Transverse colon (tissue), 4 donors: ENCODE measurements at regions of chr22 and their contacts with region 1.

Region 1: GRCh38 chr22:37817705-37818408 is 5.3 kb upstream of the GALR3 start:
- DNase-seq: peak; percentile 90
- H3K4me3 ChIP-seq: peak overlapping the region in 3 of 4 donors; percentile 15 to 45 (median 17)
- H3K27ac ChIP-seq: peak overlapping the region in 2 of 4 donors; percentile 50
- H3K4me1 ChIP-seq: peaks cover 13 to 20% (median 16%) of the 10 kb centered on the region in 4 donors
- H3K27me3 ChIP-seq: peaks cover 18% of the 10 kb centered on the region
- CTCF ChIP-seq: peak; percentile 90 to 98 (median 96)
- EP300 ChIP-seq: no peak
- POLR2A ChIP-seq: no peak

Region 2: GRCh38 chr22:37741312-37741795 is 76.5 kb before region 1 on chr22:
- in situ Hi-C with region 1: no loop called
- intact Hi-C with region 1: no loop called
- DNase-seq: peak; percentile 81
- H3K4me3 ChIP-seq: no peak overlapping the region
- H3K27ac ChIP-seq: peak overlapping the region; percentile 57 to 93 (median 85)
- H3K4me1 ChIP-seq: peaks cover 10 to 45% (median 29%) of the 10 kb centered on the region in 4 donors
- H3K27me3 ChIP-seq: no peaks in the 10 kb centered on the region
- CTCF ChIP-seq: no peak
- EP300 ChIP-seq: peak; percentile 73
- POLR2A ChIP-seq: no peak

Region 3: DNA sequence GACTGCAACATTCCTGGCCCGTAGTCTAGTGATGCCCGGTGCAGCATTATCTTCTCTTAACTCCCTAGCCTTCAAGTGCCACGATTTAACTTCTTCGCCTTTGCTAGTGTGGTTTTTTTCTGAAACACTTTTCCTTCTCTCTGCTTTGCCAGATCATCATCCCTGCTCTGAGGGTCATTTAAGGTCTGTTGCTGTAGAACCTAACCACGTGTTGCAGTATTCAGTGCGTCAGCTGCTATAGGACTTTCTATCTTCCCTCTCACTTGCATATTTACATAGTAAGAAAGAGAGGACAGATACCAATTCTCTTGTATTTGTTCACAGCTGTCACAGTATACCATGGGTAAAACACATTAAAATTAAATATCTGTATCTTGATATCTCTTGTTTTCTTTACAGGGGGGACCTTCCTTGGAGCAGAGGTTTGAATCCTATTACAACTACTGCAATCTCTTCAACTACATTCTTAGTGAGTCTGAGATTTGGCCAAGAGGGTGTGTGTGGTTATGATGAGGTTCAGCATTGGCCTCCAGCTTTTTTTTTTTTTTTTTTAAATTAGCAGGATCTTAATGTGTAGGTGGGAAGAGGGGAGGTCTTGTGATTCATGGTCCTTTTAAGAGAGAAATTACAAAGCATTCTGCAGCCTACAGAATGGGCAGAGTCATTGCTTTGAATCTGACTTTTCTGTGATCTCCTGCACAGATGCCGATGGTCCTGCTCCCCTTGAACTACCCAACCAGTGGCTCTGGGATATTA is 44.9 kb after region 1 on chr22:
- in situ Hi-C with region 1: loop called in 3 of 4 experiments (anchors 5 to 10 kb)
- intact Hi-C with region 1: loop called (anchors 2 kb)
- DNase-seq: no peak
- H3K4me3 ChIP-seq: no peak overlapping the region
- H3K27ac ChIP-seq: peak overlapping the region in 2 of 4 donors; percentile 41 to 55
- H3K4me1 ChIP-seq: peaks cover 0 to 11% (median 4%) of the 10 kb centered on the region in 4 donors
- H3K27me3 ChIP-seq: no peaks in the 10 kb centered on the region
- CTCF ChIP-seq: no peak
- EP300 ChIP-seq: no peak
- POLR2A ChIP-seq: no peak

Region 4: GRCh38 chr22:37933711-37934376 is 116.0 kb after region 1 on chr22:
- in situ Hi-C with region 1: no loop called
- intact Hi-C with region 1: loop called (anchors 10 kb)
- DNase-seq: peak; percentile 93
- H3K4me3 ChIP-seq: no peak overlapping the region
- H3K27ac ChIP-seq: peak overlapping the region; percentile 68 to 88 (median 74)
- H3K4me1 ChIP-seq: peaks cover 11 to 17% (median 15%) of the 10 kb centered on the region in 4 donors
- H3K27me3 ChIP-seq: no peaks in the 10 kb centered on the region
- CTCF ChIP-seq: peak; percentile 88 to 97 (median 96)
- EP300 ChIP-seq: no peak
- POLR2A ChIP-seq: no peak

Region 5: DNA sequence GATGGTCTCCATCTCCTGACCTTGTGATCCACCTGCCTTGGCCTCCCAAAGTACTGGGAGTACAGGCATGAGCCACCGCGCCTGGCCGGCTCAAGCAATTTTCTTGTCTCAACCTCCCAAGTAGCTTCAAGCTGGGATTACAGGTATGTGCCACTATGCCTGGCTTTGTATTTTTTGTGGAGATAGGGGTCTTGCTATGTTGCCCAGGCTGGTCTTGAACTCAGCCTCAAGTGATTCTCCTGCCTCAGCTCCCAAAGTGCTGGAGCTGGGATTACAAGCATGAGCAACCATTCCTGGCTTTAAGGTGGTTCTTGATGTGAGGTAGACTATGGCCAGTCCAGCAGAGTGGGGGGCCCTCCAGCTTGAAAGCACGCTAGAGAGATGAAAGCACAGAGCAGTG is 143.2 kb after region 1 on chr22:
- in situ Hi-C with region 1: loop called in 3 of 4 experiments (anchors 10 to 25 kb)
- intact Hi-C with region 1: loop called (anchors 5 kb)
- DNase-seq: no peak
- H3K4me3 ChIP-seq: no peak overlapping the region
- H3K27ac ChIP-seq: no peak overlapping the region
- H3K4me1 ChIP-seq: peaks cover 0 to 5% (median 1%) of the 10 kb centered on the region in 4 donors
- H3K27me3 ChIP-seq: no peaks in the 10 kb centered on the region
- CTCF ChIP-seq: no peak
- EP300 ChIP-seq: no peak
- POLR2A ChIP-seq: no peak

Region 6: DNA sequence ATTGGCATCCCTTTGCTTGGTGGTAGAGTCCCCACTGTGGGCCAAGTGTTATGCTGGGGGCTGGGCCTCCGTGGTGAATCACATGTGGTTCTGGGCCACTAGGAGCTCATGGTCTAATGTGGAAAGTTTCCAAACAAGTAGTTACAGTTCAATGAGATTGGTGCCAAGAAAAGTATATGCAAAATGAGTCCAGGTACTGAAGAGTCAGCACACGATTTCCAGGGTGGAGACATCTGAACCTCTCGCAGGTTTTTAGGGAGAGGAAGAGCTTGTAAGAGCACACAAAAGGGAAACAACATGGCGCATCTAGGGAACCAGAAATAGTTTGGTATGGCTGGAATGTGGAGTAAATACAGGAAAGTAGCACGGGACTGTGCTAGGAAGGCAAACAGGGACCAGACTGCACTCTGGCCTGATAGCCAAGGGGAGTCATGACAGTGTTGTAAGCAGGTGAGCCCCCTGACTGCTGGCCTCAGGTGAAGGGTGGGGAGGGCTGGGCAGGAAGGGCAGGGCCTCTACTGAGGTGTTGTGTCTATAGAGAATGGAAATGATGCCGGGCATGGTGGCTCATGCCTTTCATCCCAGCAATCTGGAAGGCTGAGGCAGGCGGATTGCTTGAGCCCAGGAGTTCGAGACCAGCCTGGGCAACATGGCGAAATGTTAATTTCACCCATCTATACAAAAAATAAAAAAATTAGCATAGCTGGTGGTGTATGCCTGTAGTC is 148.2 kb after region 1 on chr22:
- in situ Hi-C with region 1: loop called in 3 of 4 experiments (anchors 10 to 25 kb)
- intact Hi-C with region 1: loop called (anchors 5 kb)
- DNase-seq: no peak
- H3K4me3 ChIP-seq: no peak overlapping the region
- H3K27ac ChIP-seq: no peak overlapping the region
- H3K4me1 ChIP-seq: peaks cover 0 to 5% (median 1%) of the 10 kb centered on the region in 4 donors
- H3K27me3 ChIP-seq: no peaks in the 10 kb centered on the region
- CTCF ChIP-seq: no peak
- EP300 ChIP-seq: no peak
- POLR2A ChIP-seq: no peak